PC-9 (cell line): ENCODE measurements at regions of chr6 and their contacts with region 1.

Region 1: DNA sequence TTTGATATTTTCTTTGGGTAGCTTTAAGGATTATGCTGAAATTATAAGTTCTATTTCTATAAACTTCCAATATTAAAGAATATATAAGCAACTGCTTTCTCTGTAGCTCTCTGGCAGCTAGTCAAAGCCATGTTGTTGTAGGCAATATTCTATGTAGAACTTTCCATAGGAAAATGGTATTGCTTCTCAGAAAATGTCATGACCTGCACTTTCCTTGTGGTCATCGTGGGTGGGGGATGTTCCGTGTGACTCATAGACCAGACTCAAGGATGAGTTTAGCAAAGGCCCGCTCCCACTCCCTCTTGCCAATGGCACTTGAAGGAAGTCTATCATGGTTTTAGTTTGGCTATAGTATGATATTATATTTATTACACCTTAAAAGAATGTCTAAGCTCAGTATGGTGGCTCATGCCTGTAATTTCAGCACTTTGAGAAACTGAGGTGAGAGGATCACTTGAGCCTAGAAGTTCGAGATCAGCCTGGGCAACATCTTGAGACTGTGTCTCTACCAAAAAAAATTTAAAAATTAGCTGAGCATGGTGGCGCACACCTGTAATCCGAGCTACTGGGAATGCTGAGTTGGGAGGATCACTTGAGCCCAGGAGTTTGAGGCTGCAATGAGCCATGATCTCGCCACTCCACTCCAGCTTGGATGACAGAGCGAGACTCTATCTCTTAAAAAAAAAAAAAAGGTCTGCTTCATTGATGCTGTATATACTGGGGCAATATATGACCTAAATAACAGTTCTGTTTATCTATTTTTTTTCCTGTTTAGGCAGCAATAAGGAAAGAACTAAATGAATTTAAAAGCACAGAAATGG is 36.6 kb upstream of the LTV1 start:
- DNase-seq: no peak
- H3K4me3 ChIP-seq: no peak overlapping the region
- H3K27ac ChIP-seq: no peak overlapping the region
- H3K4me1 ChIP-seq: no peaks in the 10 kb centered on the region
- H3K27me3 ChIP-seq: no peaks in the 10 kb centered on the region
- CTCF ChIP-seq: no peak

Region 2: DNA sequence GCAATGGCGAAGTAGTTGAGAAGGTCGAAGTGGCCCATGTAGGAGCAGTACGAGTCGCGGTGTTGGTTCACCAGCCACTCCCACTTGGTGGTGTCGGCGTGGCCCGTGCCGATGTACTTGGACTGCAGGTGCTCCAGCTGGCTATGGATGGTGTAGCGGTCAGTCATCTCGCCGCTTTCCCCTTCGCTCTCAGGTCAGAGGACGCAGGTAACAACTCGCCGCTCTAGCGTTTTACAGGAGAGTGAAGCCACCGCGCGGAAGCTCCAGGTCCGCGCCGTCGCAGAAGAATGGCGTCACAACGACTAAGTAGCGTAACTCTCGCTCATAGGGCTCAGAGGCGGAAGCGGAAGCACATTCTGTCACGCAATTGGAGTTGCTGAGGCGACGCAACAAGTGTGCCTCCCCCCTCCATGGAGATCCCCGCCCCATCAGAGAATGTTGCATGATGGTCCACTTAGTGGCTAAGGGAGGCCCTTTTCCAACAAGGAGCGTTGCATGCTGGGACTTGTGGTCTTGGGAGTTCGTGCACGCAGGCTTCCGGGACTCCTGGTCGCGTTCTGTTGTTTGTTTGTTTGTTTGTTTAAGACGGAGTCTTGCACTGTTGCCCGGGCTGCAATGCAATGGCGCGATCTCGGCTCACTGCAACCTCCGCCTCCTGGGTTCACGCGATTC is 289.0 kb after region 1 on chr6 and contains the start of gene SF3B5:
- CTCF ChIA-PET with region 1: no interaction called
- POLR2A ChIA-PET with region 1: interaction called, 15 read pairs
- intact Hi-C with region 1: no loop called
- DNase-seq: peak; percentile 95 to 99
- H3K4me3 ChIP-seq: peak within 1 kb of the TSS; percentile 68
- H3K27ac ChIP-seq: peak within 1 kb of the TSS; percentile 73
- H3K4me1 ChIP-seq: peaks cover 17% of the 10 kb centered on the region; the same call in 1 of the 2 replicates
- H3K27me3 ChIP-seq: no peaks in the 10 kb centered on the region
- CTCF ChIP-seq: no peak
- total RNA-seq, gene SF3B5: 125 and 127 TPM in 2 replicates